Activated naive CD4-positive, alpha-beta T cell treated with anti-CD3 and anti-CD28 coated beads, Interleukin-2, amount 10 ng/mL, durations not matched to agents 7 days and 5 days (primary cell): ENCODE measurements at regions of chr5 and their contacts with region 1.

Region 1: GRCh38 chr5:93607367-93608258 is 24.6 kb downstream of the NR2F1 start:
- DNase-seq: no peak
- H3K4me3 Mint-ChIP-seq: no peak overlapping the region
- H3K27ac Mint-ChIP-seq: no peak overlapping the region
- H3K4me1 Mint-ChIP-seq: peaks cover 7% of the 10 kb centered on the region
- H3K27me3 Mint-ChIP-seq: peaks cover 86% of the 10 kb centered on the region

Region 2: DNA sequence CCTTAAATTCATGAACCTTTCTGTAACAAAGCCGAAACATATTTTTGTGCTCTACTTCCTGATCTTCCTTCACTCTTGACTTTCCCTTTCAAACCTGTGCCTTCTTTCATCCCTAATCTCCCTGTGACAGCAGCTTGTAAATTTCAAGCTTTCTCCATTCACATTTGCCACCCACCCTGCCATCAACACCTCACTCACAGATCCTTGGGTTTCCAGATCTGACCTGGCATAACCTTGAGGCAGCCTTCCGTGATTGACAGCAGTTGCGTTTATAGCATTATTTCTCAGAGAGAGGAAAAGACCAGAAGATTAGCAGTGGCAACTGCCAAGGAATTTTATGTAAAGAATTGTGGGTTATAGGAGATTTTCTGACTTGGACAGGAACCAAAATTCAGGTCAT is 286.7 kb before region 1 on chr5:
- CTCF ChIA-PET with region 1: no interaction called
- DNase-seq: no peak
- H3K4me3 Mint-ChIP-seq: no peak overlapping the region
- H3K27ac Mint-ChIP-seq: no peak overlapping the region
- H3K4me1 Mint-ChIP-seq: no peaks in the 10 kb centered on the region
- H3K27me3 Mint-ChIP-seq: no peaks in the 10 kb centered on the region

Region 3: GRCh38 chr5:93620487-93621326 is 13.1 kb after region 1 on chr5:
- CTCF ChIA-PET with region 1: interaction called, 10 read pairs
- DNase-seq: peak; percentile 58
- H3K4me3 Mint-ChIP-seq: peak overlapping the region; percentile 81
- H3K27ac Mint-ChIP-seq: no peak overlapping the region
- H3K4me1 Mint-ChIP-seq: peaks cover 17% of the 10 kb centered on the region
- H3K27me3 Mint-ChIP-seq: peaks cover 28% of the 10 kb centered on the region

Region 4: GRCh38 chr5:93800988-93801811 is 193.6 kb after region 1 on chr5:
- CTCF ChIA-PET with region 1: interaction called, 50 read pairs
- DNase-seq: peak; percentile 24
- H3K4me3 Mint-ChIP-seq: no peak overlapping the region
- H3K27ac Mint-ChIP-seq: no peak overlapping the region
- H3K4me1 Mint-ChIP-seq: peaks cover 3% of the 10 kb centered on the region
- H3K27me3 Mint-ChIP-seq: no peaks in the 10 kb centered on the region